ENCODE measurements at regions of chr17 and their contacts with region 1.

Region 1: GRCh38 chr17:19317359-19318095 is 45.0 kb downstream of the B9D1 start:
- DNase-seq: peak; percentile 91
- H3K4me3 ChIP-seq: no peak overlapping the region
- H3K27ac ChIP-seq: peak overlapping the region; percentile 58
- H3K4me1 ChIP-seq: peaks cover 17% of the 10 kb centered on the region
- H3K27me3 ChIP-seq: no peaks in the 10 kb centered on the region
- CTCF ChIP-seq: peak; percentile 9 to 33
- POLR2A ChIP-seq: no peak

Region 2: GRCh38 chr17:19248928-19249574 is 68.5 kb before region 1 on chr17:
- CTCF ChIA-PET with region 1: interaction called, 14 read pairs
- POLR2A ChIA-PET with region 1: no interaction called
- dilution Hi-C with region 1: no loop called
- intact Hi-C with region 1: no loop called
- DNase-seq: peak; percentile 16
- H3K4me3 ChIP-seq: no peak overlapping the region
- H3K27ac ChIP-seq: no peak overlapping the region
- H3K4me1 ChIP-seq: peaks cover 6% of the 10 kb centered on the region
- H3K27me3 ChIP-seq: no peaks in the 10 kb centered on the region
- CTCF ChIP-seq: no peak
- POLR2A ChIP-seq: no peak

Measured in endothelial cell of umbilical vein (primary cell).